ENCODE measurements at regions of chr1 and their contacts with region 1.

Region 1: DNA sequence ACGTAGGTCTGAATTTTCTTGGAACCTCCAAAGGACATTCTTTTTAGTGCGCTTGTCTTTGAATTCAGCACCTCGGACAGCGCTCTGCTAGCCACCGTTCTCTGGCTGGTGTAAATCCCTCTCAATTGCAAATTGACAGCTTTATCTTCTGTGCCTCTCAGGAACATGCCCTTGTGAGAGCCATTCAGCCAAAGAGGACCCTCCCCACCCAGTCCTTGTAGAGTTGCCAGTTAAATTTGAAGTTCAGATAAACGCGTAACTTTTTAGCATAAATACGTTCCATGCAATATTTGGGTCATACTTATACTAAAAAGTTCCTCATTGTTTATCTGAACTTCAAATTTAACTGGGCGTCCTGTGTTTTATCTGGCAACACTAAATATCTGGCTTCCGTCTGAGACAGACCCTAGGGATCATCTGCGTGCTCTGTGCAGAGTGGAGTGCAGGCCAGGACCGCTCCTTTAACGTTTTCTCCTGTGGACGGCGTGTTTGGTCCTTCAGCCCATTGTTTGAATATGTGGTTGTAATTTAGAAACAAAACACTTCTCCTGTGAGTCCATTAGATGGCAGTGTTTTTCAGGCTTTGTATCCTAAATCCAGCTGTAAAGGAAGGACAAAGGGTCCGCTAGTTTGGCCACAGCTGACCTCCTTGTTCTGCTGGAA is 7.0 kb downstream of the KCNAB2 start:
- DNase-seq: peak; percentile 51 to 74
- ATAC-seq: peak in 5 of 8 donors; percentile 58 to 74 (median 66)
- H3K4me3 ChIP-seq: no peak overlapping the region
- H3K27ac ChIP-seq: no peak overlapping the region
- H3K4me1 ChIP-seq: peaks cover 0 to 21% (median 13%) of the 10 kb centered on the region in 9 donors
- H3K27me3 ChIP-seq: no peaks in the 10 kb centered on the region
- CTCF ChIP-seq: peak; percentile 18 to 67 (median 58)

Region 2: DNA sequence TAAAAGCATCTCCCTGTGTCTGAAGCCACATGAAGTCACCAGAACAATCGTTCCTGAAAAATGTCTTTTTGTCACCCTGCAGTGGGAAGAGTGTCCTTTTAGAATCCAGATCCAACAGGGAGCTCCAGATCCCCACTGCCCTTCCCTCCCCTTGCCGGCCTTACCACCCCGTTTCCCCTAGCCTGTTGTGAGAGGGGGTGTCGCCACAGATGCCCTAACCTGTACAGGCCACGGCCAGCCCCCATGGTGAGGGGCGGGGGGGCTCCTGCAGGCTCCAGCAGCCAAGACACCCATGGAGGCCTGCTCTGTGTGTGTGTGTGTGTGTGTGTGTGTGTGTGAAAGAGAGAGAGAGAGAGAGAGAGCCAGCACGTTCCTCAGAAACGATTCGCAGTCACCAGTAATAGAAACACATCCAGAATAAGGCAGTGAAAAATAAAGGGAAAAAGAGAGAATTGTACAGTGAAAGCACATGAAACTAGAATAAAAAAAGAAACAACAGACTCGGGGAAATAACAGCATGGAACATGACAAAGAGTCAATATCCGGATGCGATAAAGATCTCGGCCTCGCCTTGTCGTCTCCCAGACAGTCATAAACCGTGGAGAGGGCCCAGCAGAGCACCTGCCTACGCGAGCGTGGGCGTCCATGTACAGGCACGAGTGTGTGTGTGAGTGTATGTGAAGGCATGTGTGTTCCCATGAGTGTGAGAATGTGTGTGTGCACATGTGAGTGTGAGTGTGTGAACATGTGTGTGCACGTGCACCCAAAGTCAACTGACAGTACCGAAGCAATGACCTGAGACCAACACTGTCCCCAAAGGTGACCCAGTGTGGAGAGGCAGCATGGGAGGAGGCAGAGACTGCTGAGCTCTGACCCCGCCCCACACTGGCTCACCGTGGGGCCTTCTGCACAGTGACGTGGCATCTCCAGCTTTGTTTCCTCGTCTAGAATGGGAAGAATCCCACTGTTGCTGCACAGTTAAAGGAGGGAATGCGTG is 364.3 kb before region 1 on chr1:
- intact Hi-C with region 1: no loop called
- DNase-seq: no peak
- ATAC-seq: no peak
- H3K4me3 ChIP-seq: no peak overlapping the region
- H3K27ac ChIP-seq: no peak overlapping the region
- H3K4me1 ChIP-seq: no peaks in the 10 kb centered on the region
- H3K27me3 ChIP-seq: peaks cover 0 to 58% (median 5%) of the 10 kb centered on the region in 7 donors
- CTCF ChIP-seq: no peak

Region 3: DNA sequence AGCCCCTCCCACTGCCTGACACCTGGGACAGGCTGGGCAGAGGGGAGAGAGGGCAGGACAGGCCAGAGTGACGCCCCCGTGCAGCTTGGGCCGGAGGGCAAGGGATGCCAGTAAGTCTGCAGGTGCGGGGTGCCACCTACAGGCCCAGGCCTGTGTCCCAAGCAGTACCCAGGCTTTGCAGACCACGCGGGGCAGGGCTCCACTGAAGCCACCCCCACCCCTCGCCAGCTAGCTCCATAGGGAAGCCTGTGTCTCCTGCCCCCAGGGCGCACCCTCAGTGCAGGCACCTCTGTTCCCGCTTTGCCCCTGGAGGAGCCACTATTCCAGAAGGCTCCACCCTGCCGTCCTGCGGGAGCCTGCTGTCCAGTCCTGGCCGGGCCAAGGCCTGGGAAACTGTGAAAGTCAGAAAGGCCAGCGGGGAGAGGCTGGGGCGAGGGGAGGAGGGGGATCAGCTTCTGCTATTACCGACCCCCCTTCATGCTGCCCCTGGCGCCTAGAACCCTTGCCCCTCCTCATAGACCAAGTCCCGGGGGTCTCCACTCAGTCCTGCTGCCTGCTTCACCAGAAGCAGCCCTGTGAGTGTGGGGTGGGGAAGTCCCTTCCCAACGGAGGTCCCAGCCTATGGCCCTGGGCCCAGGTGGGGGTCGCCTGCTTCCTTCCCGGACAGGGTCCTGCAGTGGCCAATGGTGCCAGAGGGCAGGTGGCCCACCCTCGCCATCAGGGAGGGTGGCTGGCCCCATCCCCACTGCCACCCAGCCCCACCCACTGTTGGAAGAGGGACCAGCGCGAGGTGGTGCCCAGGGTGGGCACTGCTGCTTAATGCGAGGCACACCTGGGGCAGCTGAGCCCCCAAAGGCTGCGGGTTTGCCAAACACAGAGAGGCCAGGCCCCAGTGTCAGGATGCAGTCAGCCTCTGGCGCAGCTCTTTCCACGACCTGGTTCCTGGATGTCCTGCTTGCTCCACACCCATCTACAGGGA is 47.4 kb after region 1 on chr1:
- intact Hi-C with region 1: loop called in 1 of 10 experiments (anchors 5 kb)
- DNase-seq: peak in 1 of 2 donors; percentile 5
- ATAC-seq: peak in 2 of 8 donors; percentile 28 to 31
- H3K4me3 ChIP-seq: no peak overlapping the region
- H3K27ac ChIP-seq: no peak overlapping the region
- H3K4me1 ChIP-seq: peaks cover 0 to 20% (median 0%) of the 10 kb centered on the region in 9 donors
- H3K27me3 ChIP-seq: peaks cover 0 to 44% (median 26%) of the 10 kb centered on the region in 7 donors
- CTCF ChIP-seq: peak in 4 of 9 donors; percentile 9 to 24 (median 16)

Region 4: GRCh38 chr1:6171548-6172119 is 119.0 kb after region 1 on chr1:
- intact Hi-C with region 1: loop called in 2 of 10 experiments (anchors 10 kb)
- DNase-seq: no peak
- ATAC-seq: peak in 5 of 8 donors; percentile 25 to 56 (median 33)
- H3K4me3 ChIP-seq: no peak overlapping the region
- H3K27ac ChIP-seq: no peak overlapping the region
- H3K4me1 ChIP-seq: no peaks in the 10 kb centered on the region
- H3K27me3 ChIP-seq: peaks cover 0 to 74% (median 43%) of the 10 kb centered on the region in 7 donors
- CTCF ChIP-seq: peak in 6 of 9 donors; percentile 17 to 40 (median 34)

Region 5: GRCh38 chr1:6185635-6186382 is 133.1 kb after region 1 on chr1:
- intact Hi-C with region 1: loop called in 7 of 10 experiments (anchors 10 kb)
- DNase-seq: no peak
- ATAC-seq: peak in 1 of 8 donors; percentile 29
- H3K4me3 ChIP-seq: no peak overlapping the region
- H3K27ac ChIP-seq: no peak overlapping the region
- H3K4me1 ChIP-seq: peaks cover 0 to 17% (median 6%) of the 10 kb centered on the region in 9 donors
- H3K27me3 ChIP-seq: peaks cover 0 to 13% (median 2%) of the 10 kb centered on the region in 7 donors
- CTCF ChIP-seq: peak in 7 of 9 donors; percentile 33 to 59 (median 51)

Region 6: DNA sequence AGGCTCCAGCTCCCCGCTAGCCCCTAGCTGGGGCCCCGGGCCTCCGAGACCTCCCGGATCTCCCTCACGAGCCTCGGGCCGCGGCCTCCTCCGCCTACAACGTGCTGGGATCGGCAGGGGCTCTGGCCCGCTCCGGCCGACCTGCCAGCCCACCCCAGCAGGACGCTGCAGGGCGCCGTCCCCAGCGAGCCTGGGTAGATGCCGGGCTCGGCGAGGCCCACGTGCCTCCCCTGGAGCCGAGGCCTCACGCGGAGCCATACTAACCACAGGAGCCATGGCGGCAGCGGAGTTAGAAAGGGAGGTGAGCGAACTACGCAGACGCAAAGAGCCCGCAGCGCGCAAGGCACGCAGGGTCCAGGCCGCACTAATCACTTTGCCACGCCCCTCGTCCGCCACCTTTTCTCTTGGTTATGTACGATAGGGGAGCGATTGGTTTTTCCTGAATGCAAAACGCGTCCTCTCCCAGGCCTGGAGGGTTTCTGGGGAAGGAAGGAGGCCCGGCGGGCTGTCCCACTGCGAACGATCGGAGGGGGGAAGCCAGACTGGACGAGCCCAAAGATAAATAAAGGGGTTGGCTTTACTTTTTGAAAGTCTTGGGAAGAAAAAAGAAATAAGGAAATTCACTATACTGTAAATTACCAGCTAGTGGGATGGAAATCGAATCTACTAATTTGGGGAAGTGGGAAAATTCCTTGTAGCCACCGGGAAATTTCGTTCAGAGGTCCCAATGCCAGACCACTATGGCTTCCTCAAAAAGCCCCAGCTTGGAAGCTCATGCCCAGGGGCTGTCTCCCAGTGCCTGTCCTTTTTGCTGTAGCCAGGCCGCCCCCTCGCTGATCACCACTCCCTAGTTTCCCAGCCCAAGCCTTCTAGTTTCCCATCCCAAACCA is 146.9 kb after region 1 on chr1 and contains the start of gene RPL22:
- intact Hi-C with region 1: loop called in 2 of 10 experiments (anchors 10 kb)
- DNase-seq: peak; percentile 96 to 99
- ATAC-seq: peak; percentile 96 to 99 (median 98)
- H3K4me3 ChIP-seq: peak within 1 kb of the TSS; percentile 72 to 100 (median 90)
- H3K27ac ChIP-seq: peak within 1 kb of the TSS; percentile 3 to 92 (median 88)
- H3K4me1 ChIP-seq: peaks cover 0 to 37% (median 32%) of the 10 kb centered on the region in 9 donors
- H3K27me3 ChIP-seq: no peaks in the 10 kb centered on the region
- CTCF ChIP-seq: no peak
- total RNA-seq, gene RPL22: 223 to 298 (median 273) TPM

Region 7: GRCh38 chr1:6235296-6235677 is 182.6 kb after region 1 on chr1:
- intact Hi-C with region 1: loop called in 6 of 10 experiments (anchors 5 to 10 kb)
- DNase-seq: no peak
- ATAC-seq: peak in 1 of 8 donors; percentile 3
- H3K4me3 ChIP-seq: peak overlapping the region; percentile 50 to 96 (median 82)
- H3K27ac ChIP-seq: peak overlapping the region; percentile 27 to 87 (median 74)
- H3K4me1 ChIP-seq: peaks cover 8 to 45% (median 34%) of the 10 kb centered on the region in 9 donors
- H3K27me3 ChIP-seq: peaks cover under 1 to 21% (median 11%) of the 10 kb centered on the region in 7 donors
- CTCF ChIP-seq: no peak

Region 8: GRCh38 chr1:6343506-6344405 is 291.1 kb after region 1 on chr1:
- intact Hi-C with region 1: loop called in 2 of 10 experiments (anchors 10 kb)
- DNase-seq: peak; percentile 61
- ATAC-seq: peak; percentile 72 to 85 (median 78)
- H3K4me3 ChIP-seq: no peak overlapping the region
- H3K27ac ChIP-seq: no peak overlapping the region
- H3K4me1 ChIP-seq: peaks cover 0 to 13% (median 7%) of the 10 kb centered on the region in 9 donors
- H3K27me3 ChIP-seq: no peaks in the 10 kb centered on the region
- CTCF ChIP-seq: peak; percentile 67 to 90 (median 83)